ENCODE measurements at regions of chr2 and their contacts with region 1.

Region 1: GRCh38 chr2:215920244-215921100 is 92.9 kb downstream of the MREG start:
- DNase-seq: peak; percentile 24 to 81
- ATAC-seq: peak; percentile 98 to 99
- H3K4me3 ChIP-seq: no peak overlapping the region
- H3K27ac ChIP-seq: peak overlapping the region; percentile 50; a peak in 5 of 6 replicates
- H3K4me1 ChIP-seq: peaks cover 25% of the 10 kb centered on the region
- CTCF ChIP-seq: peak; percentile 96
- EP300 ChIP-seq: no peak
- POLR2A ChIP-seq: no peak
- RAD21 ChIP-seq: peak; percentile 99

Region 2: DNA sequence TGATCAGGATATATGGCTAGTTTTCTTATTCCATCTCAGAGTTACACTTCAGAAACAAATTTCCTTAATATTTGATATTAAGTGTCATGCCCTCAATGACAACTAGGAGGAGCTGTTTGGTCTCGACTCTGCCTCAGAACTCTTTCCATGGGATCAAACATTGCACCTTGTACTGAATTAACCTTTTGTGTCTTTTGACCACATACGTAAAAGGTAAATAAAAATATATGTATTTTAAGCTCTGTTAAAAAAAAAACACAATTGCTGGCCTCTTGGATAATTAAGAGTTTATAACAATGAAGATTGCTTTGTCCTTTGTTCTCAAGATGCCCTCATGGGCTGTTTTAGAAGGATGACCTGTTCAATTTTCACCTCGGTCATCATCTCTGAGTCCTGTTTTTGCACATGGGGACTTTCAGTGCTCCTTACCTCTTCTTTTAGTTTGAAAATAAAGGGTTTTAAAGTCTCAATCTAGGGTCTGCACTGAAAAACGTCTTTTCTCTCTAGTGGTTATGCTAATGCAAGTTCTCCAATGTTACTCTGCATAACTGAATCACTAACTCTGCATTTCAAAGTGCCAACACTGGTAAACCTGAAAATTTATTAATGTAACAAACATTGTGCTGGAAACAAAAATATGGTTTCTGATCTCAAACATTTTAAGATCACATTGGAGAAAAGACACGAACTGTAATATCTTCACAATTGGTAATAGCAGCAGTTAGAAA is 465.8 kb before region 1 on chr2:
- CTCF ChIA-PET with region 1: interaction called, 16 read pairs
- POLR2A ChIA-PET with region 1: no interaction called
- DNase-seq: peak; percentile 23 to 42
- ATAC-seq: peak in 1 of 2 experiments; percentile 60; a peak in 2 of 6 replicates
- H3K4me3 ChIP-seq: no peak overlapping the region
- H3K27ac ChIP-seq: peak overlapping the region in 1 of 2 experiments; percentile 55; a peak in 1 of 6 replicates
- H3K4me1 ChIP-seq: no peaks in the 10 kb centered on the region
- CTCF ChIP-seq: peak; percentile 73
- EP300 ChIP-seq: no peak
- POLR2A ChIP-seq: no peak
- RAD21 ChIP-seq: peak; percentile 73 to 74

Region 3: GRCh38 chr2:215896921-215897320 is 23.6 kb before region 1 on chr2:
- CTCF ChIA-PET with region 1: no interaction called
- POLR2A ChIA-PET with region 1: no interaction called
- DNase-seq: no peak
- ATAC-seq: no peak
- H3K4me3 ChIP-seq: no peak overlapping the region
- H3K27ac ChIP-seq: no peak overlapping the region
- H3K4me1 ChIP-seq: peaks cover 3% of the 10 kb centered on the region; the same call in 1 of the 3 replicates
- CTCF ChIP-seq: no peak
- EP300 ChIP-seq: no peak
- POLR2A ChIP-seq: no peak
- RAD21 ChIP-seq: no peak

Region 4: DNA sequence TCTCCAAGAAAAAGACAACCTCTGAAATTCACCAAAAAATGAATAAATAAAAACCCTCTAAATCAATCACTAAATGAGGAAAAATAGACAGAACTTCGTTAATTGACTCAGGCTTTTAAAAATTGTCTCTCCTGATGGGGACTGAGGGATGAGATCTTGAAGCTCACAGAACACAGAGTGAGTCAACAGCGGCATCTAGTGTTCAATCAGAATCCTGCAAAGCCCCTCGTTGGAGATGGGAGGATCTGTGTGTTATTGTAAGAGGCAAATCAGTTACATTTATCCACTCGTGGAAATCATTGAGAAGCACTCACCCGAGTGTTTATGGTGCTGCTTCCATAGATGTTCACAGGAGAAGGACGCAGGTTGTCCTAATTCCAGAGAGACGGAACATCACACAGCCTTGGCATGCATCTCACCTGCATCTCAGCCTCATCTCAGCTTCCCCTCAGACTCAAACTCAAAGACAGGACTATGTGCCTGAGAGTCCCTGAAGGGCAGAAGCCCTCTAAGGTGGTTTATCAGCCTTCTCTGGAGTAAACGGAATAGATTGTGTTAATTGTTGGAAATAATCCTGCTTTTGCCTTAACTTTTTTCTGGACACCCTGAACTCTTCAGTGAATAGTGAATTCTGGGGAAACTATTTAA is 10.9 kb after region 1 on chr2:
- CTCF ChIA-PET with region 1: interaction called, 10 read pairs
- POLR2A ChIA-PET with region 1: no interaction called
- DNase-seq: peak; percentile 48 to 77
- ATAC-seq: peak; percentile 92 to 96
- H3K4me3 ChIP-seq: no peak overlapping the region
- H3K27ac ChIP-seq: peak overlapping the region in 1 of 2 experiments; percentile 26; a peak in 1 of 6 replicates
- H3K4me1 ChIP-seq: peaks cover 23% of the 10 kb centered on the region
- CTCF ChIP-seq: peak; percentile 97
- EP300 ChIP-seq: no peak
- POLR2A ChIP-seq: no peak
- RAD21 ChIP-seq: peak; percentile 96 to 97

Measured in A549 (cell line).